IMR-90 (cell line): ENCODE measurements at regions of chr13 and their contacts with region 1.

Region 1: GRCh38 chr13:109145631-109146030 is 516.2 kb downstream of the MYO16 start:
- DNase-seq: peak; percentile 72
- ATAC-seq: peak; percentile 82
- H3K4me3 ChIP-seq: no peak overlapping the region
- H3K27ac ChIP-seq: no peak overlapping the region
- H3K4me1 ChIP-seq: peaks cover 9% of the 10 kb centered on the region
- H3K27me3 ChIP-seq: peaks cover 12% of the 10 kb centered on the region
- CTCF ChIP-seq: peak; percentile 92
- POLR2A ChIP-seq: no peak
- RAD21 ChIP-seq: peak; percentile 96

Region 2: GRCh38 chr13:108629181-108629752 is 516.4 kb before region 1 on chr13 and contains the start of gene MYO16:
- CTCF ChIA-PET with region 1: no interaction called
- POLR2A ChIA-PET with region 1: no interaction called
- dilution Hi-C with region 1: no loop called
- in situ Hi-C with region 1: no loop called
- intact Hi-C with region 1: no loop called
- DNase-seq: no peak
- ATAC-seq: no peak
- H3K4me3 ChIP-seq: no peak within 1 kb of the TSS
- H3K27ac ChIP-seq: no peak within 1 kb of the TSS
- H3K4me1 ChIP-seq: no peaks in the 10 kb centered on the region
- H3K27me3 ChIP-seq: peaks cover 3% of the 10 kb centered on the region
- CTCF ChIP-seq: no peak
- POLR2A ChIP-seq: no peak
- RAD21 ChIP-seq: no peak
- total RNA-seq, gene MYO16: under 0.01 TPM in 2 replicates

Region 3: GRCh38 chr13:109256866-109257760 is 111.5 kb after region 1 on chr13:
- CTCF ChIA-PET with region 1: no interaction called
- POLR2A ChIA-PET with region 1: no interaction called
- dilution Hi-C with region 1: no loop called
- in situ Hi-C with region 1: loop called (anchors 5 kb)
- intact Hi-C with region 1: loop called (anchors 2 kb)
- DNase-seq: peak; percentile 97
- ATAC-seq: peak; percentile 94
- H3K4me3 ChIP-seq: no peak overlapping the region
- H3K27ac ChIP-seq: peak overlapping the region; percentile 72
- H3K4me1 ChIP-seq: no peaks in the 10 kb centered on the region; the same call in 1 of the 2 replicates
- H3K27me3 ChIP-seq: no peaks in the 10 kb centered on the region
- CTCF ChIP-seq: no peak
- POLR2A ChIP-seq: no peak
- RAD21 ChIP-seq: no peak

Region 4: DNA sequence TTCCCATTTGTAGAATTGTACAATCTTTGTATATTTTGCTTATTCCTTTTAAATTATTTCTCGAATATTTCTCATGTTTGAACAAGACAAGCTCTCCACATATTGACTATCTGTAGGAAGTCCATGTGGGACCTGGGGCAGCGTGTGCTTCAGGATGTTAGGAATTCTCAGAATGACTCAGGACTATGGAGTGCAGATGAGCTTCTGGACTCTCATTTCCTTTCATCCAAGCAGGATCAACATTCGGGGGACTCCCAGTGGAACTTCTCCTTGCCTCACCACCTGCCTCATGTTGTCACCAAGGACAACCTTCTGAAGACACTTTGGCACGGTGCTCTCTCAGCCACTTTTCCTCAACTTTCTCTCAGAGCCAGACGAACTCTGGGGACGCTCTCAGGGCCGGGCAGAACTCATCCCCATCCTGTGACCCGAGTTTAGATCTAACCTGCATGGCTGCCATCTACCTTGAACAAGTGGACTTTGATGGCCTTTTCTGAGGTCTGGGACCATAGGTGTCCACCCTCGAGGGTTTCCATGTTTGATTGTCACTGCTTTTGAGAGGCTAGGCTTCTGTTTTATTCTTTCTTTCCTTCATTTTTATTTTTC is 199.0 kb after region 1 on chr13:
- CTCF ChIA-PET with region 1: interaction called, 3 read pairs
- POLR2A ChIA-PET with region 1: no interaction called
- dilution Hi-C with region 1: no loop called
- in situ Hi-C with region 1: no loop called
- intact Hi-C with region 1: loop called (anchors 2 kb)
- DNase-seq: peak; percentile 82
- ATAC-seq: peak; percentile 84
- H3K4me3 ChIP-seq: no peak overlapping the region
- H3K27ac ChIP-seq: peak overlapping the region; percentile 69
- H3K4me1 ChIP-seq: peaks cover 13% of the 10 kb centered on the region
- H3K27me3 ChIP-seq: no peaks in the 10 kb centered on the region
- CTCF ChIP-seq: no peak
- POLR2A ChIP-seq: no peak
- RAD21 ChIP-seq: no peak

Region 5: DNA sequence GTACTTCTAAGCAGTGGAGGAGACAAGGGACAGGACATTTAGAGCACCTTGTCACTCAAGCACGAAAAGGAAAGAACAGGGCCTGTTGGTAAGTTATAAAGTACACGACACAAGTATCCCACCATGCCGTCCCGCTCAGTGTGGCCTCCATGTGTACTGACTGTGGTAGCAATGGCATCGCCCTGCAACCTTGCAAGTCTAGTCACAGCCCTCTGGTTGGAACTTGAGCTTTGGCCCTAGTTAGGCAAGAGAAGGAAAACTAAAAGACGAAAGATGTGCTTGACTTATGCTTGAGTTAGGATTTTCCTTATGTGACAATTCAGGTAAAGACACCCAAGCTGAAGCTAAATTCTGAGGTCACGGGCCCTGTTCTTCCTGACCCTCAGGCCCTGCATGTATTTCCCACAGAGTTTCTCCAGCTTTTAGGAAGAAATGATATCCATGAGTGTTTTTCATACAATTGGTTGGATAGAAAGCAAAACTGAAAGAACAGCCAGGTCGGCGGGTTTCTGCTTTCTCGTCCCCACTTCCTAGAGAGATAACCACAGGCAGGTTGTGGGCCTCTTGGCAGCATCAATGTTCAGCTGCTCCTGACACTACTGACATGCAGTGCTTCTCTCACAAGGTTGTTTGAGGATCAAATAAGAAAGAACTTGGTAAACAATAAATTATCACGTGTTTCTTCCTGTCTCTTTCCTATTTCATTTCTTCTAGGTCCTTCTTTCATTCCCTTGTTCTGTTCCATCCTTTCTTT is 424.5 kb after region 1 on chr13:
- CTCF ChIA-PET with region 1: no interaction called
- POLR2A ChIA-PET with region 1: no interaction called
- dilution Hi-C with region 1: no loop called
- in situ Hi-C with region 1: no loop called
- intact Hi-C with region 1: loop called (anchors 5 kb)
- DNase-seq: no peak
- ATAC-seq: no peak
- H3K4me3 ChIP-seq: no peak overlapping the region
- H3K27ac ChIP-seq: no peak overlapping the region
- H3K4me1 ChIP-seq: no peaks in the 10 kb centered on the region
- H3K27me3 ChIP-seq: peaks cover 8% of the 10 kb centered on the region
- CTCF ChIP-seq: no peak
- POLR2A ChIP-seq: no peak
- RAD21 ChIP-seq: no peak

Region 6: GRCh38 chr13:110108347-110109174 is 962.9 kb after region 1 on chr13:
- CTCF ChIA-PET with region 1: interaction called, 4 read pairs
- POLR2A ChIA-PET with region 1: no interaction called
- dilution Hi-C with region 1: no loop called
- in situ Hi-C with region 1: loop called (anchors 5 kb)
- intact Hi-C with region 1: loop called (anchors 2 kb)
- DNase-seq: peak; percentile 88
- ATAC-seq: peak; percentile 80
- H3K4me3 ChIP-seq: no peak overlapping the region
- H3K27ac ChIP-seq: no peak overlapping the region
- H3K4me1 ChIP-seq: peaks cover 18% of the 10 kb centered on the region
- H3K27me3 ChIP-seq: no peaks in the 10 kb centered on the region
- CTCF ChIP-seq: peak; percentile 91
- POLR2A ChIP-seq: peak; percentile 53; the same call in 1 of the 2 replicates
- RAD21 ChIP-seq: peak; percentile 99